ENCODE measurements at regions of chr6 and their contacts with region 1.

Region 1: GRCh38 chr6:111873178-111874024 is at the start of gene FYN:
- DNase-seq: peak; percentile 99
- ATAC-seq: peak; percentile 99
- total RNA-seq, gene FYN: 50.4 TPM

Region 2: DNA sequence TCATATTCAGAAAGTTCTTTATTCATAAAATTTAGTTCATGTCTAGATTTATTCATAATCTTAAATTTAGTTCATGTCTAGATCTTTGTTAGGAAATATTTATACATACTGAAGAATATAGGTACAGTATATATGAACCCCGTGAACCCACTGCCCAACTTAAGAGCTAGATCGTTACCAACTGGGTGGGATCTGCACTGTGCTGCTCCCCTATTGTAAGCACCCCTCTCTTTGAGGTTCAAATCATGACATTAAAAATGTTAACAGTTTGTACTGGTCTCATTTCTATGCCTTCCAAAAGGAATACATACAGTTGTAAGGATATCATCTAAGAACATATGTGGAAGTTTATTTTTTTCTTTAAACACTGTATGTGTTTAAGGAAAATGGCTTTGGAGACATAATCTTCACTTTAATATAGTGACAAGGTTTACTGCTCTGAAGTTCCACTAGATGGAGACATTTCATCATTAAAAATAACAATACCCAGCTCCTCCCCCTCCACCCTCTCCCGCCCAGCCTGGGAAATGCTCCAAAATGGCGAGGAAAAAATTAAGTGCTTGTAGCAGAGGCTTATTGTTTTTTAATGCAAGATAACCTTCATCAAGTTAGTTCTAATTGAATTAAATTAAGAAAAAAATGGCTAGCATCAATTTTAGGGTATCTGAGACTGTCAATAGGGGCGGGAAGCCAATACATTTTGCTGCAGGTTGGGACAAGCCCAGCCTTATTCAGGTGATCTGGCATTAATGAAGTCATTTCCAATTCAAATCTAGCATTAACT is 163.6 kb before region 1 on chr6:
- intact Hi-C with region 1: loop called (anchors 1 kb)
- DNase-seq: peak; percentile 76
- ATAC-seq: peak; percentile 83

Region 3: GRCh38 chr6:111750753-111751684 is 122.4 kb before region 1 on chr6:
- intact Hi-C with region 1: no loop called
- DNase-seq: no peak
- ATAC-seq: no peak

Region 4: GRCh38 chr6:111777357-111777756 is 96.0 kb before region 1 on chr6:
- intact Hi-C with region 1: no loop called
- DNase-seq: no peak
- ATAC-seq: no peak

Region 5: DNA sequence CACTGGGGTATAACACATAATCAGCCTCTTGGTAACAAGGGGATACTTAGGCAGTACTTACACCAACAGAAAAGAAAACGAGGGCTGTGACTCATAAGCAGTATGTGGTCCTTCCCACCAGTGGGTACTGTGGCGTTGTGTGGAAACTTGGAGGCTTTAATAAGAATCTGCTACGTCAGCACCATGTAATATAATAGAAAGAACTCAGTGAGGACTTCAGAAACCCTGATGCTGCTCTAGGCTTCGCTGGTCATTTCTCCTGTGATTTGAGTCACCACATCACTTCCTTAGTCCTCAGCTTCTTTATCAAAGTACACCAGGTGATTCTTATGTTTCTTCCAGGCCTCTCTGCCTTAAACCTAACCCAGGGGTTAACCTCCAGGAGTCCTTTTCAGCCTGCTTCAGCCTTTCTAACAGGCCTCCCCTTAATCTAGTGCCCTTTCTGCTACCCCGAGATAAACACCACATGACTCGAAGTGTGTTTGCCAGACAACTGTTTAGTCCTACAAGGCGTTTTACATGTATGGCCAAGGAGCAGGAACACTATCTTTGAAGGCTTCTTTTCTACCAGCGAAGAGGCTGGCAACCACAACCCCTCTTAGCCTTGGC is 68.7 kb before region 1 on chr6:
- intact Hi-C with region 1: loop called (anchors 5 kb)
- DNase-seq: no peak
- ATAC-seq: peak; percentile 73

Region 6: DNA sequence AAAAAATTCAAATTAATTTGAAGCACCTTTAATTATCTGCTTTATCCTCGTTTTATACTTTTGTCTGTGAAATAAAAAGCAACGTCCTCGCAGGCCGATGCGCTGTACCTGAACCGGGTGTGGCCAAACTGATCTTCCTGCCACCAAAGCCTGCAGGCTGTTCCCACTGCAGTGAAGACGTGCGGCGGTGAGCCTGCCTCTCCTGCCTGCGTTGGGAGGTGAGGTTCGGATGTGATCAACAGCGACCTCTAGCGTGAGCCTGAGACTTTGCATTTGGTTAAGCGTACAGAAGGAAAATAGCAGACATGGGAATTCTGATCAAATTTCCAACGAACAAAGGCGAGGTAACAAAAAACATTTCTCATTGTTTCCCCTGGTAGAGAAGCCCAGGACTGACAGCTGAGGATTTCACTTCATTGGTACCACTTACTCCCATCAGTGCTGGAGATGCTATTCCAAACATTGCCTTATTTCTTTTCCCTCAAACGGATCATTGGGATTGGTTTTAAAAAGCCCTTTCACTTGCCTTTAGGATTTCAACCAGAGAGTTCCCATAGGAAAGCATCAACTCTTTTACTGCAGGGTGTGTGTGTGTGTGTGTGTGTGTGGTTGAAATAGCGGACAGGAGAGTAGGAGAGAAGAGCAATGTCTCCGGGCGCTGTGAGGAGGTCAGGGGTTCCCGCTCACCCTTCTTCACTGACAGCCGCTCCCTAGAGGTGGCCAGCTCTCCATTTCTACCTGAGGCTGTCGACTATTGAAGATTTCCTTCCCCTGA is 123.9 kb after region 1 on chr6:
- intact Hi-C with region 1: loop called (anchors 2 kb)
- DNase-seq: peak; percentile 88
- ATAC-seq: peak; percentile 91

Region 7: DNA sequence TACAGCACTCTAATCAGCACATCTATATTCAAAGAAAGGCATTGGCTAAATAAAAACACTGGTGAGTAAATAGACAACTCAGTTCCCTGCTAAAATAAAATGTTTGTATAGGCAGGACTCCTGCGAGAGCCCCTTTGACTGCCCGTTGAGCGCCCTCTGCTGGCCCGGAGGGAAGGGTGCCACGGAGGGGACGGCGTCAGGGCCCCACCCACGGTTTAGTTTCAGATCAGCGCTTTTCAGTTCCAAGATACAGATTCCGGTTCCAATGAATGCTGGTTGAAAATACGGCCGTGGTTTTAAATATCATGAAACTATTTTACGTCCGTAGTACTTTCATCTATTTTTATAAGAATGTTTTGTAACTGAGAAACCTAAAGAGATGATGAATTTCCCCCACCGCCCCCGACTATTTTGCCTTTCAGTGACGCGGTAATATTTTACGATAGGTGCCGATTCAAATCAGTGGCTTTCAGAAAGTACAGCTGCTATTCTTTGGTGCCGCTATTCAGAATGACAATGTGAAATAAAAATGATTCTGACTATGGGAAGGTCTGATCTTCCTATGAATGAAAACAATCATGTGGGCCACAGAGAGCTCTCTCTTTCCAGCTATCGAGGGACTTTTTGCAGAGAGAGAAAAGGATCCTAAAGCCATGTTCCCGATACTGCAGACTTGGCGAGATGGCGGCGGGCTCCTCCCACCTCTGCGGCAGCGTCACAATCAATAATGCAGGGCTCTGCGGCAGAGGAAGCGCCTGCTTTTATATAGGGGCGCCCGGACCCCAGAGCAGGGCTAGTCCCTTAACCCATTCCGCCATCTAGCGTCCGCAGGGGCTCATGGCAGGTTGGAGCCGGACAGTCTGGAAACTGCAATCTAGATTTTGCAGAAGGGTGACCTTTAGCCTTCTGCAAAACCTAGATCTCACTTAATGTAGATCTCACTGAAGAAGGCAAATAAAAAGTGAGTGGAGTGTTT is 169.9 kb after region 1 on chr6:
- intact Hi-C with region 1: loop called (anchors 2 kb)
- DNase-seq: peak; percentile 92
- ATAC-seq: peak; percentile 95

Region 8: GRCh38 chr6:112163295-112164257 is 290.2 kb after region 1 on chr6:
- intact Hi-C with region 1: no loop called
- DNase-seq: peak; percentile 73
- ATAC-seq: peak; percentile 42

Measured in Right ventricle myocardium inferior (tissue), 1 donor.